Naive thymus-derived CD4-positive, alpha-beta T cell (primary cell): ENCODE measurements at regions of chr3 and their contacts with region 1.

Region 1: GRCh38 chr3:27632431-27633223 is 89.5 kb downstream of the EOMES start:
- DNase-seq: peak; percentile 21 to 56 (median 44)
- ATAC-seq: peak; percentile 92
- H3K4me3 ChIP-seq: peak overlapping the region; percentile 77
- H3K4me3 Mint-ChIP-seq: peak overlapping the region; percentile 92 to 99 (median 95)
- H3K27ac ChIP-seq: peak overlapping the region; percentile 70
- H3K27ac Mint-ChIP-seq: peak overlapping the region; percentile 88 to 99 (median 93)
- H3K4me1 ChIP-seq: peaks cover 0 to 18% of the 10 kb centered on the region in 2 donors
- H3K4me1 Mint-ChIP-seq: peaks cover 11 to 31% (median 29%) of the 10 kb centered on the region in 7 donors
- H3K27me3 ChIP-seq: no peaks in the 10 kb centered on the region
- H3K27me3 Mint-ChIP-seq: no peaks in the 10 kb centered on the region

Region 2: DNA sequence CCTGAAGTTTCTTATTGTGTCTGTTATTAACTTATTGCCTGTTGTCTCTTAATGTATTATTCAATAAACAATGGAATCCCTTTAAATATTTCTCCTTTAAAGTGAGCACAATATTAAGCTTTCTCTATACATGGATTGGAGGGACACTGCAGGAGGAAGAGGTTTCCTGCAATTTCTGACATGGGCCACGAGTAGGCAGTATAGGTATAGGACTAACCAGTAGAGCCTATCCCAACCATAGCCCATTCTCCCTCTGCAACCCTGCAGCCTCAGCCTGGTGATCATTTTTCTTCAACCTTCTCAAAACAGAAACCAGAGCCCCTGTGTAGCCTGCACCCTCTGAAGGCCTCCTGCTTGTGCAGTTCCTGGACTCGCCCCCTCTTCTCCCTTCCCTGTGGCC is 388.3 kb before region 1 on chr3:
- CTCF ChIA-PET with region 1: no interaction called
- POLR2A ChIA-PET with region 1: no interaction called
- intact Hi-C with region 1: no loop called
- DNase-seq: no peak
- ATAC-seq: no peak
- H3K4me3 ChIP-seq: no peak overlapping the region
- H3K4me3 Mint-ChIP-seq: no peak overlapping the region
- H3K27ac ChIP-seq: no peak overlapping the region
- H3K27ac Mint-ChIP-seq: no peak overlapping the region
- H3K4me1 ChIP-seq: no peaks in the 10 kb centered on the region
- H3K4me1 Mint-ChIP-seq: no peaks in the 10 kb centered on the region
- H3K27me3 ChIP-seq: no peaks in the 10 kb centered on the region
- H3K27me3 Mint-ChIP-seq: peaks cover 0 to 11% (median 4%) of the 10 kb centered on the region in 5 donors

Region 3: GRCh38 chr3:27590437-27591298 is 42.0 kb before region 1 on chr3:
- CTCF ChIA-PET with region 1: no interaction called
- POLR2A ChIA-PET with region 1: no interaction called
- intact Hi-C with region 1: loop called in 1 of 2 experiments (anchors 5 kb)
- DNase-seq: no peak
- ATAC-seq: peak; percentile 73
- H3K4me3 ChIP-seq: no peak overlapping the region
- H3K4me3 Mint-ChIP-seq: peak overlapping the region in 7 of 10 donors; percentile 0 to 56 (median 46)
- H3K27ac ChIP-seq: no peak overlapping the region
- H3K27ac Mint-ChIP-seq: peak overlapping the region; percentile 6 to 78 (median 41)
- H3K4me1 ChIP-seq: peaks cover 25 to 26% of the 10 kb centered on the region in 2 donors
- H3K4me1 Mint-ChIP-seq: peaks cover 23 to 33% (median 26%) of the 10 kb centered on the region in 7 donors
- H3K27me3 ChIP-seq: no peaks in the 10 kb centered on the region
- H3K27me3 Mint-ChIP-seq: no peaks in the 10 kb centered on the region